Lower leg skin (tissue), 4 donors: ENCODE measurements at regions of chr3 and their contacts with region 1.

Region 1: GRCh38 chr3:136861890-136862616 is at the start of gene NCK1:
- DNase-seq: peak; percentile 99 to 100
- H3K4me3 ChIP-seq: peak within 1 kb of the TSS; percentile 88
- CTCF ChIP-seq: peak in 1 of 3 donors; percentile 40
- POLR2A ChIP-seq: peak in 1 of 2 donors; percentile 67
- total RNA-seq, gene NCK1: 53.1 to 74.0 (median 61.6) TPM

Region 2: DNA sequence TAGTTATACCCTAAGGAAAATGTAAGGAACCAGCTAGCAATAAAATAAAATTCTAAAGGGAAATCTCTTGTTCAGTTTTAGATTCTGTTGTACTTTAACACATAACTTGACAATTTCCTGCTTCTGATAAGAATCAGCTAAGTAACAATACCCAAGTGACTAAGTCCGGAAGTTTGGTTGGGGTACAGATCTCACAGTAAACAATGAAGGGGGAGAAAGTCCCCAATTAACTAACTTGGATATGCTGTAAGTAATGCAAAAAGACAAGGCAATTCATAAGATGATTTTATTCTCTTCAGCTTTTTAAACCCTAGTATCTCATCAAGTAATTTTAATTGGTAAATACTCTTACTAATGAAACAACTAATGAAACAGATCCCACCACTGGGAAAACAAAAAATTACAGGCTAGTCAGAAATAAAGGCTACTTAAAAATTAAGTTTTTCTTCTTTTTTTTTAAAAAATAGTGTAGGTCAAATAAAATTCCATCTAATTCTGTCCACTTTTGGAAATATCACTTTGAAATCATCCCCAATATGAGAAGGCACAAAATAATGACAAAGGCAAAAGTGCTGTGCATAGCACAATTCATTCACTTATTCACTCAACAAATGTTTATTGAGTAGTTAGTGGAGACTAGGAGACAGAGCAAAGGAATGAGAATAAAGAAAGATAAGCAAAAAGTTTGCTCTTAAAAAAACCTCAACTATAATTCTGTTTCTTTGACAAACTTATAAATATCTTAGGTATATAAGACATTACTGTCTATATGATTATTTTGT is 57.9 kb after region 1 on chr3:
- intact Hi-C with region 1: loop called (anchors 10 kb)
- DNase-seq: no peak
- H3K4me3 ChIP-seq: no peak overlapping the region
- CTCF ChIP-seq: no peak
- POLR2A ChIP-seq: no peak